ENCODE measurements at regions of chr13 and their contacts with region 1.

Region 1: GRCh38 chr13:42377640-42378382 is 105.9 kb downstream of the AKAP11 start:
- DNase-seq: peak; percentile 63
- H3K4me3 Mint-ChIP-seq: no peak overlapping the region
- H3K27ac Mint-ChIP-seq: peak overlapping the region; percentile 93
- H3K4me1 Mint-ChIP-seq: peaks cover 90% of the 10 kb centered on the region
- H3K27me3 Mint-ChIP-seq: no peaks in the 10 kb centered on the region

Region 2: DNA sequence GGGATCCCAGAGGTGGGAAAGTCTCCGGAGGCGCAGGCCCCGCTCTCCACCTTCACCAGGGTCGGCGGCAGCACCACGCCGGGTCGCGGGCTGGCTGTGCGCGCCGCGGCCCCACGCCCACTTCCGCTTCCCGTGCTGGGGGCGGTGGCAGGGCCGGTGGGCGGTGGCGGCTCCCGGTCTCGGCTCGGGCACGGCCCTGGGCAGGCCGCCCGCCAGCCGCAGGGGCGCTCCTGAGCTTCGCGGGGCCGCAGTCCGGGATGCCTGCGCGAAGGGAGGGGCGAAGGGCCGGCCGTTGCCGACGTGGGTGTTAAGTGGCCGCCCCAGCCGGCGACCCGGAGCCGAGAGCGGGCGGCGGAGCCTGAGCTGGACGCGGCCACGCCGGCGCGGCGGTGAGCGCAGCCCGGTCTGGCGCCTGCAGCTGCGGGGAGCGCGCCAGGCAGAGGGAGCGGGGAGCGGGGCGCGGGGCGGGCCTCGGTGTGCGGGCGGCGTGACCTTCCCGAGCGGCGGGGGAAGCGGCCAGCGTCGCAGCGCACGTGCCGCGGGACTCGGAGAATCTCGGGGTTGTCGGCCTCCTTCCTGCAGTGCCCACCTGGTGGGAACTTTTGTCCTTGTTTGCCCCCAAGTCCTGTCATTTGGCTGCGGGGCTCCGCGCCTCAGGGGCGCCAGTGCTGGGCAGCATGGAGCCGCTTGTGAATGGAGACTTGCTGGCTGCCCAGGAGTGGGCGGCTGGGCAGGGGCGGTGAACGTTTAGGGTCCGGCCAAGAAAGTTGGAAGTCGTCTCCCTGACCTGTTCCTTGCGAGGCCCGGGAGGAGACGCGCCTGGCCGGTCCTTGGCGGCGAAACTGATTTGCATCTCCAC is 1588.3 kb before region 1 on chr13 and contains the start of gene SLC25A15:
- intact Hi-C with region 1: loop called (anchors 10 kb)
- DNase-seq: peak; percentile 62
- H3K4me3 Mint-ChIP-seq: peak within 1 kb of the TSS; percentile 73
- H3K27ac Mint-ChIP-seq: peak within 1 kb of the TSS; percentile 76
- H3K4me1 Mint-ChIP-seq: peaks cover 36% of the 10 kb centered on the region
- H3K27me3 Mint-ChIP-seq: no peaks in the 10 kb centered on the region
- total RNA-seq, gene SLC25A15: 21.8 and 24.1 TPM in 2 replicates

Region 3: GRCh38 chr13:41465241-41465847 is 912.5 kb before region 1 on chr13:
- intact Hi-C with region 1: loop called (anchors 10 kb)
- DNase-seq: peak; percentile 88
- H3K4me3 Mint-ChIP-seq: peak overlapping the region; percentile 76
- H3K27ac Mint-ChIP-seq: peak overlapping the region; percentile 92
- H3K4me1 Mint-ChIP-seq: peaks cover 69% of the 10 kb centered on the region
- H3K27me3 Mint-ChIP-seq: no peaks in the 10 kb centered on the region

Region 4: GRCh38 chr13:42328672-42329071 is 49.1 kb before region 1 on chr13:
- intact Hi-C with region 1: loop called (anchors 1 kb)
- DNase-seq: no peak
- H3K4me3 Mint-ChIP-seq: no peak overlapping the region
- H3K27ac Mint-ChIP-seq: peak overlapping the region; percentile 79
- H3K4me1 Mint-ChIP-seq: peaks cover 40% of the 10 kb centered on the region
- H3K27me3 Mint-ChIP-seq: no peaks in the 10 kb centered on the region

Region 5: DNA sequence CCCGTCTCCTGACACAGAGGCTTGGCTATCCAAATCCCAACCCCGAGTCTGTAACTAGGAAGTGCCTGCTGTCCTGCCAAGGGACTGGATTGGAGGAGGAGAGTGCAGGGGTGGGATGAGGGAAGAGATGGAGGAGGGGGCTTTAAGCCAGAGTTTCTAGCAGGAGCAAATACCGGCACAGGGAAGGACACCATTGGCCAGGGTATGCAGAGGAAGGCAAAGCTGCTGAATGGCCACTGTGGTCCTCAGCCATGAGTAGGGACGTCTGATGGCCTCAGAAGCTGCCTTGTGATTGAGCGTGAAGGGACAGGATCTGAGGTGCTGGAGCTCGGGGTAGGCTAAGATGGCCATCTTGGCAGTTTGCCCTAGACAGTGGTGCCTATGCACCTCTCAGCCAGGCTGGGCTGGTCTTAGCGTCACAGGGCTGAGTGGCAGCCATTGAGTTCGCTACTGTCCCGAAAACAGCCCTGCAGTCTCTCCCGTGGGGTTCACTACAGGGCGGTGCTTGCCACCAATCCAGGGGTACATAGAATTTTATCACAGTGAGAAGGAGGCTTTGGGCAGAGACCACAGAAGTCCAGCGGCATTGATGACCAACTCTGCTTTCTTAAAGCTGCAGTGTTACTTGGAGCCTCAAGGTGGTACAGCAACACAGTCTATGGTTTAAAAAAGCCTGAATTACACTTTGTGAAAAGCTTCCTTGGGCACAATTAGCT is 44.0 kb before region 1 on chr13:
- intact Hi-C with region 1: loop called (anchors 1 kb)
- DNase-seq: no peak
- H3K4me3 Mint-ChIP-seq: no peak overlapping the region
- H3K27ac Mint-ChIP-seq: peak overlapping the region; percentile 77
- H3K4me1 Mint-ChIP-seq: peaks cover 56% of the 10 kb centered on the region
- H3K27me3 Mint-ChIP-seq: no peaks in the 10 kb centered on the region

Region 6: GRCh38 chr13:42354241-42355091 is 23.3 kb before region 1 on chr13:
- intact Hi-C with region 1: loop called (anchors 1 kb)
- DNase-seq: no peak
- H3K4me3 Mint-ChIP-seq: peak overlapping the region; percentile 77
- H3K27ac Mint-ChIP-seq: peak overlapping the region; percentile 100
- H3K4me1 Mint-ChIP-seq: peaks cover 64% of the 10 kb centered on the region
- H3K27me3 Mint-ChIP-seq: no peaks in the 10 kb centered on the region

Region 7: GRCh38 chr13:42405665-42406390 is 28.0 kb after region 1 on chr13:
- intact Hi-C with region 1: loop called (anchors 1 kb)
- DNase-seq: no peak
- H3K4me3 Mint-ChIP-seq: peak overlapping the region; percentile 62
- H3K27ac Mint-ChIP-seq: peak overlapping the region; percentile 96
- H3K4me1 Mint-ChIP-seq: peaks cover 68% of the 10 kb centered on the region
- H3K27me3 Mint-ChIP-seq: no peaks in the 10 kb centered on the region